Cardiac septum (tissue), 1 donor: ENCODE measurements at regions of chr16 and their contacts with region 1.

Region 1: DNA sequence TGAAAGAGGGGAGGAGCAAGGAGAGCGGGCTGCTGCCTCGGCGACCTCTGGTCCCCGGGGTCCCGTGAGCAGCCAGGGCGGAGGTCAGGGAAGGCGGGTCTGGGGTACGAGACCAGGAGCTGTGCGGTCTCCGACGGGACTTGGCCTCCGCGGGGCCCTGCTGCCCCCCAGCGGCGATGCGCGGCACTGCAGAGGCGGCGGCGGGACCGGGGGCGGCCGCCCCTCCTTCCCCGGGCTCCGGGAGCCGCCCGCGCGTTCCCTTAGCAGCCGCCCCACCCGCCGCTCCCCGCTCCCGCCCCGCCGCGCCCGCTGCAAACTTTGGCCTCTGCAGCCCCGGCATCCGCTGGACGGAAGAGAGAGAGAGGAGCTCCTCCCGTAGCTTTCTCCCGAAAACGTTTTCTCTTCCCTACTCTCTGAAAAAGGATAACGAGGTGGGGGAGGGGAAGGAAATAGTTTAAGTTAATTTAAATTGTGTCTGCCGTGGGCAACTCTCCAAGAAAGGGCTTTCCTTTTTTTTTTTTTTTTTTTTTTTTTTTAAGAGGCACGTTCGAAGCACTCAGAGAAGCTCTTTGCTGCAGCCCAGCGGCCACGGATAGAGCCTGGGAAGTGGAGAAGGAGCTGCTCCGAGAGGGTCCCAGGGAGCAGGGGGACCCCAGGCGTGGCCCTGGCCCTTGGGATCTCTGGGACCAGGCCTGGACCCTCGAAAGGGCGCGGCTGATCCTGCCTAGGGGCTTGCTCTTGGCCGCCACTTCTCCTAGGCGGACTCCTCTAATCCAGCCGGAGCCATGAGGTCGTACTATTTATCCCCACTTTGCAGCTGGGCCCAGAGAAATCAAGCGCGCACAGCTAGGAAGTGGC is 43.2 kb downstream of the C16orf82 start:
- DNase-seq: peak; percentile 88

Region 2: DNA sequence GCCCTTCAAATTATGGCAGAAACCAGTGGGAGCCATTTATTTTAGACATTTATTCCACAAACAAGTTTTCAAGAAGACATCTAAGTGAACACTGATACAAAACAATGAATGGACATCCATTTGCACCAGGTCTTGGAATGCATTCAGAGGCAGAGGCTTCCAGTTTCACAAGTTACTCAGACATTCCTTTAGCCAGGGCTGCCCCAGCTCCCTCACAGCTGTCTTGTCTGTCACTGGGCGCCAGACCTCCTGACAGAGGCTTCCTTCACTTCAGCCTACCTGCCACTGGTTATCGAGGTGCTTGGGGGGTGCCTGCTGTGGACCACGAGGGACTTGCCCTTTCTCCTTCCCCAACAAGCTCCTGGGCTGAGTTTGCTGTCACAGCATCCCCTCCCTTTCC is 1873.9 kb before region 1 on chr16:
- intact Hi-C with region 1: loop called (anchors 5 kb)
- DNase-seq: no peak

Region 3: GRCh38 chr16:25838724-25839186 is 1271.1 kb before region 1 on chr16:
- intact Hi-C with region 1: loop called (anchors 2 kb)
- DNase-seq: no peak